ENCODE measurements at regions of chr6 and their contacts with region 1.

Region 1: GRCh38 chr6:66865771-66866170 is 1158.7 kb upstream of the EYS start:
- DNase-seq: peak; percentile 81
- ATAC-seq: peak; percentile 96
- H3K4me3 ChIP-seq: no peak overlapping the region
- H3K27ac ChIP-seq: peak overlapping the region; percentile 76
- H3K4me1 ChIP-seq: peaks cover 29% of the 10 kb centered on the region
- H3K27me3 ChIP-seq: no peaks in the 10 kb centered on the region
- CTCF ChIP-seq: no peak

Region 2: DNA sequence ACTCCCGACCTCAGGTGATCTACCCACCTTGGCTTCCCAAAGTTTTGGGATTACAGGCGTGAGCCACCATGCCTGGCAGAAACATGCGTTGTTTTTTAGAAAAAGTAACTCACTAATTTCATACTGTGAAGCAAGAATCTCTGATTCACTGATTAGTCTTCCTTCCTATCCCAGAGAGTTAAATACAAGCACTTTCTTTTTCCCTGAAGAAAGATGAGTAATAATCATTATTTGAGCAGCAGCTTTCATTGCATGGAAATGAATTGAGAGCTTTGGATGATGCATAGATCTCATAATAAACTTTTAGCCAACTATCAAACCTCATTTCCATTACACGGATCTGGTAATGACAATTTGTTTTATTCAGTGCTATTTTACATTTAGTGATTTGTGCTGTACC is 266.2 kb before region 1 on chr6:
- CTCF ChIA-PET with region 1: no interaction called
- POLR2A ChIA-PET with region 1: no interaction called
- intact Hi-C with region 1: no loop called
- DNase-seq: peak; percentile 57
- ATAC-seq: peak; percentile 88
- H3K4me3 ChIP-seq: no peak overlapping the region; the same call in 1 of the 2 replicates
- H3K27ac ChIP-seq: peak overlapping the region; percentile 26
- H3K4me1 ChIP-seq: peaks cover 15% of the 10 kb centered on the region; the same call in 1 of the 2 replicates
- H3K27me3 ChIP-seq: no peaks in the 10 kb centered on the region
- CTCF ChIP-seq: no peak

Region 3: GRCh38 chr6:66725670-66726069 is 140.1 kb before region 1 on chr6:
- CTCF ChIA-PET with region 1: no interaction called
- POLR2A ChIA-PET with region 1: no interaction called
- intact Hi-C with region 1: loop called (anchors 10 kb)
- DNase-seq: no peak
- ATAC-seq: no peak
- H3K4me3 ChIP-seq: no peak overlapping the region
- H3K27ac ChIP-seq: no peak overlapping the region
- H3K4me1 ChIP-seq: peaks cover under 1% of the 10 kb centered on the region; the same call in 1 of the 2 replicates
- H3K27me3 ChIP-seq: no peaks in the 10 kb centered on the region
- CTCF ChIP-seq: no peak